WTC11 (cell line): ENCODE measurements at regions of chr6 and their contacts with region 1.

Region 1: DNA sequence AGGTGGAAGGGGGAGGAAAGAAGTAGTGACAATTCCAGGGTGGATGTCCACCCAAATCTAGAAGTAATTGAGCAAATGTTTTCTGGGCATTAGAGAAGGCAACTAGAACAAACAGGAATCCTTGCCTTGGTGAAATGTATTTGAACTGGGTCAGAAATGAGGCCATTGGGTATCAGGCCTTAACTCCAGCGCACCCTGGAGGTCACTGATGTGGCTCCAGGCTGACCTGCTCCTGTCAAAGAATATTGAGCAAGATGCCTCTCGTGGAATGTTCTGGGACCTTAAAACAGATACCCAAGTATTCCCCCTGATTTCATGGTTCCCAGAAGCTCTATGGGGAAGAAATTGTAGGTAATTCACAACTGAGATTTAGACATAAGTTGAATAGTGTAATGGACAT is 6.9 kb downstream of the HLA-DPB1 start:
- DNase-seq: peak; percentile 51
- ATAC-seq: peak; percentile 38
- H3K4me3 Mint-ChIP-seq: peak overlapping the region; percentile 9; the same call in 1 of the 2 replicates
- H3K27ac Mint-ChIP-seq: peak overlapping the region; percentile 51; the same call in 1 of the 2 replicates
- H3K4me1 Mint-ChIP-seq: peaks cover 31% of the 10 kb centered on the region
- H3K27me3 Mint-ChIP-seq: peaks cover 18% of the 10 kb centered on the region
- CTCF ChIP-seq: peak; percentile 26; the same call in 1 of the 2 replicates

Region 2: GRCh38 chr6:32763427-32763826 is 319.3 kb before region 1 on chr6 and contains the start of gene HLA-DQB2:
- CTCF ChIA-PET with region 1: no interaction called
- POLR2A ChIA-PET with region 1: no interaction called
- DNase-seq: no peak
- ATAC-seq: no peak
- H3K4me3 Mint-ChIP-seq: no peak within 1 kb of the TSS
- H3K27ac Mint-ChIP-seq: no peak within 1 kb of the TSS
- H3K4me1 Mint-ChIP-seq: peaks cover 18% of the 10 kb centered on the region
- H3K27me3 Mint-ChIP-seq: peaks cover 24% of the 10 kb centered on the region
- CTCF ChIP-seq: no peak
- total RNA-seq, gene HLA-DQB2: 0.39 to 0.76 TPM (median 0.42 TPM) in 3 replicates

Region 3: DNA sequence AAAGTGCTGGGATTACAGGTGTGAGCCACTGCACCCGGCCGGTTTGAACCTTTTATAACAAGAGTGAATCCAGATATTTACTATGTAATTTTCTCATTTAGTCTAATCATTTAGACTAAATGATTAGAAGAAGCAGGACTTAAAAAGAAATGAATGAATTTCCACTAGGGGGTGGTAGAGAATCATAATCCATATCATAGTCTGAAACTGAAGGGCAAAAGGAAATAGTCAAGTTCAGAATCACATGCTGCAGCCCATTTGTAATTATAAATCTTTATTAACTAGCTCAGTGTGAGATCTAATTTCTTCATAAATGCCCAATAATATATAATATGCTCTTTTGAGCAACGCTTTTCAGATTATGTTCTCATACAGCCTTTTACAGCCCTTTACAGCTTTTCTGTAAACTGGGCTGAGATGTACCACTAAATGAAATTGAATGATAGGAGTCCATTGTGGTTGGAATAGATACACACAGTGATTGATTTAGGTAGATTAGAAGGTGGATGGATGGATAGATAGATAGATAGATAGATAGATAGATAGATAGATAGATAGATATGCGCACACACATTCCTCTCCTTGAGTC is 196.9 kb before region 1 on chr6:
- CTCF ChIA-PET with region 1: no interaction called
- POLR2A ChIA-PET with region 1: no interaction called
- DNase-seq: no peak
- ATAC-seq: no peak
- H3K4me3 Mint-ChIP-seq: no peak overlapping the region
- H3K27ac Mint-ChIP-seq: no peak overlapping the region
- H3K4me1 Mint-ChIP-seq: no peaks in the 10 kb centered on the region
- H3K27me3 Mint-ChIP-seq: peaks cover 9% of the 10 kb centered on the region
- CTCF ChIP-seq: peak; percentile 14; the same call in 1 of the 2 replicates

Region 4: DNA sequence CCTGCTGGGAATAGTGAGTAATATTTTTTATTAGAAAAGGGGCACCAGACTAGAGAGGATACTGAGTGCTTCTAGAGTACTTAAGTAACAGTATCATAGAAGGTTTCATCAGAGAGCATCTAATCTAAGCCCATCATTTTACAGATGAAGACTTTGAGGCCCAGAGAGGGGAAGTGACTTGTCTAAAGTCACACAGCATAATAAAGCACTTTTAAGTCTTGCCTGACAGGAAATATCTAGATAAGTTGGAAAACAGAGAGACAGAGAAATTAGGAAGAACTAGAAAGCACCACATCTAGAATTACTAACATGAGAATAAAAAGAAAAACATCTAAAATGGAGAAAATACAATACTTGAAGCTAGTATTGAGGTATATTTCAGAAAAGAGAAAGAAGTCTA is 135.8 kb before region 1 on chr6:
- CTCF ChIA-PET with region 1: no interaction called
- POLR2A ChIA-PET with region 1: no interaction called
- DNase-seq: no peak
- ATAC-seq: no peak
- H3K4me3 Mint-ChIP-seq: no peak overlapping the region
- H3K27ac Mint-ChIP-seq: no peak overlapping the region
- H3K4me1 Mint-ChIP-seq: peaks cover 7% of the 10 kb centered on the region; the same call in 1 of the 2 replicates
- H3K27me3 Mint-ChIP-seq: no peaks in the 10 kb centered on the region
- CTCF ChIP-seq: no peak

Region 5: GRCh38 chr6:32971581-32972352 is 110.9 kb before region 1 on chr6:
- CTCF ChIA-PET with region 1: no interaction called
- POLR2A ChIA-PET with region 1: interaction called, 16 read pairs
- DNase-seq: peak; percentile 99
- ATAC-seq: peak; percentile 56
- H3K4me3 Mint-ChIP-seq: peak overlapping the region; percentile 98
- H3K27ac Mint-ChIP-seq: peak overlapping the region; percentile 100
- H3K4me1 Mint-ChIP-seq: peaks cover 32% of the 10 kb centered on the region
- H3K27me3 Mint-ChIP-seq: peaks cover 4% of the 10 kb centered on the region; the same call in 1 of the 2 replicates
- CTCF ChIP-seq: no peak

Region 6: GRCh38 chr6:33049323-33050013 is 33.2 kb before region 1 on chr6:
- CTCF ChIA-PET with region 1: interaction called, 17 read pairs
- POLR2A ChIA-PET with region 1: no interaction called
- DNase-seq: no peak
- ATAC-seq: peak; percentile 71
- H3K4me3 Mint-ChIP-seq: no peak overlapping the region
- H3K27ac Mint-ChIP-seq: no peak overlapping the region
- H3K4me1 Mint-ChIP-seq: peaks cover 46% of the 10 kb centered on the region
- H3K27me3 Mint-ChIP-seq: peaks cover 1% of the 10 kb centered on the region; the same call in 1 of the 2 replicates
- CTCF ChIP-seq: peak; percentile 26; the same call in 1 of the 2 replicates

Region 7: DNA sequence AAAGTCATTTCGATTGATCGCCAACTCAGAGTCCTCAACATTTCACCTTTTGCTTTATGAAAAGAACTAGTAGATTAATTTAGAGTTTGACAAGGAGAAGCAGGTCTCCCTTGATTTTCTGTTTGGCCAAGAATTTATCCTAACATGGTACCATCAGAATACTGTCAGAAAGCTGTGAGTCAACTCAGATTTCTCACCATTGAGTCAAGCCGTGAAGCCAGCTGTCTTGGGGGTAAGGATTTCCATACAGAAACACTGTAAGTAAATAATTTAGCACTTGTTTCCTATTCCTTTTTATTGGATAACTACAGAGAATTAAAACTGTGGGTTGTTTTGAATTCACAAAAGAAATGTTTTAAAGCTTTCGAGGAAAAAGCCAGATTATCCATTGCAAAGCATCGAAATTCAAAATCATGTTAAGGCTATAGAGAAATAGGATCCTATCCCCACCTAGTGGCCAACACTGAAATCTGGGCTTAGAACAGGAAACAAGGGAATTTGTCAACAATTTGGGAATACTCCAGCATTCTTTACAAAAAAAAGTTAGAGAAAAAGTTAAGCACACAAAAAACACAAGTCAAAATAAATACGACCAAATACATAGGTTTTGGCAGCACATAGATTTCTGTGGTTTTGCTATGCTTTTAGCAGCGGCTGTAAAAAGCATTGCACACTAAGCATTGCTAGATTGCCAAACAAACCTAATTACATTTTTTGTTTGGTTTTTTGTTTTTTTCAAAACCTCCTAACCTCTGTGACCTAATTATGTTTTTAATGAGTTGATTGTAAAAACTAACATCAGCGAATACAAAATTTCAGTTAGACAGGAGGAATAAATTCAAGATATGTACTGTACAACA is 65.3 kb after region 1 on chr6:
- CTCF ChIA-PET with region 1: interaction called, 18 read pairs
- POLR2A ChIA-PET with region 1: no interaction called
- DNase-seq: no peak
- ATAC-seq: no peak
- H3K4me3 Mint-ChIP-seq: no peak overlapping the region
- H3K27ac Mint-ChIP-seq: no peak overlapping the region; the same call in 1 of the 2 replicates
- H3K4me1 Mint-ChIP-seq: peaks cover 23% of the 10 kb centered on the region
- H3K27me3 Mint-ChIP-seq: peaks cover 9% of the 10 kb centered on the region
- CTCF ChIP-seq: peak; percentile 59; the same call in 1 of the 2 replicates

Region 8: GRCh38 chr6:33172688-33173534 is 90.2 kb after region 1 on chr6:
- CTCF ChIA-PET with region 1: interaction called, 13 read pairs
- POLR2A ChIA-PET with region 1: no interaction called
- DNase-seq: peak; percentile 71
- ATAC-seq: peak; percentile 79
- H3K4me3 Mint-ChIP-seq: no peak overlapping the region
- H3K27ac Mint-ChIP-seq: no peak overlapping the region; the same call in 1 of the 2 replicates
- H3K4me1 Mint-ChIP-seq: 0 out of 2 replicates have a peak, but pooled peaks cover 3% of the 10 kb centered on the region
- H3K27me3 Mint-ChIP-seq: peaks cover 7% of the 10 kb centered on the region; the same call in 1 of the 2 replicates
- CTCF ChIP-seq: peak; percentile 51

Region 9: GRCh38 chr6:33183071-33183683 is 100.5 kb after region 1 on chr6:
- CTCF ChIA-PET with region 1: no interaction called
- POLR2A ChIA-PET with region 1: no interaction called
- DNase-seq: no peak
- ATAC-seq: no peak
- H3K4me3 Mint-ChIP-seq: no peak overlapping the region
- H3K27ac Mint-ChIP-seq: peak overlapping the region; percentile 85; the same call in 1 of the 2 replicates
- H3K4me1 Mint-ChIP-seq: peaks cover 7% of the 10 kb centered on the region
- H3K27me3 Mint-ChIP-seq: peaks cover 18% of the 10 kb centered on the region
- CTCF ChIP-seq: no peak